ENCODE measurements at regions of chr17 and their contacts with region 1.

Region 1: DNA sequence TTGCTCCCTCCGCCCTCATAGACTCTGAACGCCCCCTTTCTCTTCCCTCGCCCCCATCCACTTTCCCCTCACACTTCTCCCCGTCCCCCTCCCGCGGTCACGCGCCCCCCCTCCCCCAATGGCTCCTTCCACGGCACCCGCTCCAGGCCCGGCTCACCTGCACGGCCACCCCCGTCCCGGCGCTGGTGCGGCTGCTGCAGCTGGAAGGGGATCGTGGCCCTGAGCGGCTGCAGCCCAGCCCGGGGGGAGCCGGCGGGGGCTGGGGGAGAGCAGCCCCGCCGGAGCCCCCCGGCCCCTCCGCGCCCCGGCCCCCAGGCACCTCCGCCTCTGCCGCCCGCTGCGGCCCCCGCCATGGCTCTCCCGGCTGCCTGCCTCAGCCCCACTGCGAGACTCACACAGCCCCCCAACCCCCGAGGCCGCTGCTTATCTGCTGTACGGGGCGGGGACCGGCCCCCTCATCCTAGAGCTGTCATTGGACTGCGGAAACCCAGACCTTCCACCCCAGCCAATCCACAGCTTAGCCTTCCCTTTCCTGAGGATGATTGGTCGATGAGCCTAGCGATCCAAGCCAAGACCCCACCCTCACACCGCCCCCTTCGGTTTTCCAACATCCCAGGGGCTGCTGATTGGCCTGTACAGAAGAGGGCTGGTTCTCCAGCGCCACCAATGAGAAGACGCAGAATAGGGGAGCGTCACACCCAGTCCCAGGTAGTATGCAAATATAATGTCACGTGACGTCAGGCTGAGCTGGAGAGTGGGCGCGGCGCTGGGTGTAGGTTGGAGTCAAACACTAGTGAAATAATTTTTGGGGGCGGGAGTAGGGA is at the start of gene FAM117A:
- DNase-seq: peak; percentile 99
- H3K4me3 Mint-ChIP-seq: peak within 1 kb of the TSS; percentile 80
- H3K27ac Mint-ChIP-seq: peak within 1 kb of the TSS; percentile 50
- H3K4me1 Mint-ChIP-seq: peaks cover 6% of the 10 kb centered on the region
- H3K27me3 Mint-ChIP-seq: peaks cover 20% of the 10 kb centered on the region
- CTCF ChIP-seq: no peak
- total RNA-seq, gene FAM117A: 2.0 and 5.0 TPM in 2 replicates

Region 2: GRCh38 chr17:49739641-49740271 is 24.2 kb before region 1 on chr17:
- CTCF ChIA-PET with region 1: no interaction called
- POLR2A ChIA-PET with region 1: no interaction called
- intact Hi-C with region 1: no loop called
- DNase-seq: peak; percentile 61
- H3K4me3 Mint-ChIP-seq: no peak overlapping the region
- H3K27ac Mint-ChIP-seq: no peak overlapping the region
- H3K4me1 Mint-ChIP-seq: peaks cover 6% of the 10 kb centered on the region
- H3K27me3 Mint-ChIP-seq: no peaks in the 10 kb centered on the region
- CTCF ChIP-seq: no peak

Region 3: GRCh38 chr17:49788478-49789242 is 24.7 kb after region 1 on chr17 and contains the start of gene KAT7:
- CTCF ChIA-PET with region 1: no interaction called
- POLR2A ChIA-PET with region 1: interaction called, 17 read pairs
- intact Hi-C with region 1: no loop called
- DNase-seq: peak; percentile 99
- H3K4me3 Mint-ChIP-seq: peak within 1 kb of the TSS; percentile 93
- H3K27ac Mint-ChIP-seq: peak within 1 kb of the TSS; percentile 98
- H3K4me1 Mint-ChIP-seq: peaks cover 17% of the 10 kb centered on the region
- H3K27me3 Mint-ChIP-seq: no peaks in the 10 kb centered on the region
- CTCF ChIP-seq: no peak
- total RNA-seq, gene KAT7: 45.1 and 53.7 TPM in 2 replicates

Region 4: DNA sequence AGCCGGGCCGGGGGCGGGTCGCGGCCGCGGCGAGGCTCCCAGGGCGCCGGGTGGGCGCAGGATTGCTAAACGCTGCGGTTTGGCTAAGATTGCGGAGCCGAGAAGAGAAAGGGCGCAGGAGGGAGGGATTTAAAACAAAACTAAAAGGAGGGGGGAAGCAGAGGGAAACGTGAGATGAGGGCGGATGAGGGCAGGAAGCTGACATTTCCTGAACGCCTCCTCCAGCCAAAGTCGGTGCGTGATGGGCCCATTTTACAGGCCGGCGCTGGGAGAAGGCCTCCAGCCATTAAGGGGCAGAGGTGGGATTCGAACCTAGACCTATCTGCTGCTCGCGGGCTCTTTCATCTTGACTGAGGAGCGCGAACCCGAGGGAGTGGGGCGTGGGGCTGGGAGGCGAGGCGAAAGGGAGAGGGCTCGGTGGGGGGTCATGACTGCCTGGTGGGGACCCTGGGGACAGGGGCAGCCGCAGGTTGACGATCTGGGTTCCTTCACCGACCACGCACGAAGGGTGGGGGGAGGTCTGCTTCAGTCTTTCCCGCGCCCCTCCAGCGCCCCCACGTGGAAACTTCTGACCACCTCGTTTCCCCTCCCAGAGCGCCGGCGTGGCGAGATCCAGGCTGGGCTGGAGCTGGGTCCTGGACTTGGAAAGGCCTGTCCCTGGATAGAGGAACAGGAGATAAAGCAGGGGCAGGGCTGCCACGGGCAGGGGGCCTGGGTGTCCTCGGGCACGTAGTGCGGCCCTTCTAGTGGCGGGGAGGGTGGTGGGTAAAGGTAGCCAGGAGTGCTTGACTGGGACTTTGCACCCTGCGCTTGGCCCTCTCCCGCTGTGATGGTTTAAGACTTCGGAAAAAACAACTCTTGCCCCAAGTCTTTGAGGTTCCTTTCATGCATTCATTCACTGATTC is 87.7 kb after region 1 on chr17:
- CTCF ChIA-PET with region 1: no interaction called
- POLR2A ChIA-PET with region 1: no interaction called
- intact Hi-C with region 1: no loop called
- DNase-seq: peak; percentile 47
- H3K4me3 Mint-ChIP-seq: peak overlapping the region; percentile 65
- H3K27ac Mint-ChIP-seq: no peak overlapping the region
- H3K4me1 Mint-ChIP-seq: no peaks in the 10 kb centered on the region
- H3K27me3 Mint-ChIP-seq: peaks cover 45% of the 10 kb centered on the region
- CTCF ChIP-seq: peak; percentile 26